CD8-positive, alpha-beta T cell (primary cell): ENCODE measurements at regions of chr21 and their contacts with region 1.

Region 1: GRCh38 chr21:31873696-31874599 is 1.1 kb downstream of the HUNK start:
- DNase-seq: peak in 6 of 9 experiments; percentile 13 to 64 (median 38)
- ATAC-seq: peak; percentile 44
- H3K4me3 ChIP-seq: peak overlapping the region; percentile 15 to 30
- H3K4me3 Mint-ChIP-seq: no peak overlapping the region
- H3K27ac ChIP-seq: no peak overlapping the region
- H3K27ac Mint-ChIP-seq: no peak overlapping the region
- H3K4me1 ChIP-seq: peaks cover 6% of the 10 kb centered on the region
- H3K4me1 Mint-ChIP-seq: peaks cover 11% of the 10 kb centered on the region
- H3K27me3 ChIP-seq: peaks cover 3 to 14% of the 10 kb centered on the region in 2 experiments
- H3K27me3 Mint-ChIP-seq: peaks cover 46% of the 10 kb centered on the region
- CTCF ChIP-seq: no peak

Region 2: GRCh38 chr21:31957631-31958030 is 83.7 kb after region 1 on chr21:
- CTCF ChIA-PET with region 1: no interaction called
- POLR2A ChIA-PET with region 1: no interaction called
- intact Hi-C with region 1: loop called in 1 of 2 experiments (anchors 10 kb)
- DNase-seq: peak in 6 of 9 experiments; percentile 9 to 65 (median 44)
- ATAC-seq: peak; percentile 55
- H3K4me3 ChIP-seq: no peak overlapping the region
- H3K4me3 Mint-ChIP-seq: peak overlapping the region; percentile 57
- H3K27ac ChIP-seq: peak overlapping the region in 1 of 2 experiments; percentile 21
- H3K27ac Mint-ChIP-seq: peak overlapping the region; percentile 89
- H3K4me1 ChIP-seq: peaks cover 36% of the 10 kb centered on the region
- H3K4me1 Mint-ChIP-seq: peaks cover 21% of the 10 kb centered on the region
- H3K27me3 ChIP-seq: no peaks in the 10 kb centered on the region
- H3K27me3 Mint-ChIP-seq: peaks cover 3% of the 10 kb centered on the region
- CTCF ChIP-seq: no peak